Activated B cell treated with CpG ODN at 0.5 μM for 24 hours (primary cell): ENCODE measurements at regions of chr21 and their contacts with region 1.

Region 1: GRCh38 chr21:29002442-29003144 is 9.9 kb upstream of the LTN1 start:
- DNase-seq: peak; percentile 90
- ATAC-seq: peak; percentile 100
- H3K4me3 Mint-ChIP-seq: peak overlapping the region; percentile 90
- H3K27ac Mint-ChIP-seq: peak overlapping the region; percentile 95
- H3K4me1 Mint-ChIP-seq: peaks cover 12% of the 10 kb centered on the region
- H3K27me3 Mint-ChIP-seq: no peaks in the 10 kb centered on the region
- CTCF ChIP-seq: no peak

Region 2: GRCh38 chr21:28884976-28885852 is 117.4 kb before region 1 on chr21:
- CTCF ChIA-PET with region 1: no interaction called
- POLR2A ChIA-PET with region 1: interaction called, 5 read pairs
- intact Hi-C with region 1: loop called (anchors 1 kb)
- DNase-seq: peak; percentile 88
- ATAC-seq: peak; percentile 95
- H3K4me3 Mint-ChIP-seq: peak overlapping the region; percentile 88
- H3K27ac Mint-ChIP-seq: peak overlapping the region; percentile 93
- H3K4me1 Mint-ChIP-seq: peaks cover 20% of the 10 kb centered on the region
- H3K27me3 Mint-ChIP-seq: peaks cover 7% of the 10 kb centered on the region
- CTCF ChIP-seq: no peak

Region 3: DNA sequence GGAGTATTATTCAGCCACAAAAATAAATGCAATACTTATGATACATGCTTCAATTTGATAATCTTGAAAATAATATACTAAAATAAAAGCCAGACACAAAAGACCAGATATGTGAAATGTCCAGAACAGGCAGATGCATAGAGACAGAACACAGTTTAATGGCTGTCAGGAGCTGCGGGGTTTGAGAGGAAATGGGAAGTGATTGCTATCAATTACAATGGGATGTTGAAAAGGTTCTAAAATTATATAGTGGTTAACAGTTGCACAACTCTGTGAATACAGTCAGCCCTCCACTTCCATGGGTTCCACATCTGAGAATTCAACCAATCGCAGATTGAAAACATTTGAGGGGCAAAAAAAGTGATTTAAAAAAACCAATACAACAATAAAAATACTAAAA is 63.9 kb before region 1 on chr21:
- CTCF ChIA-PET with region 1: no interaction called
- POLR2A ChIA-PET with region 1: no interaction called
- intact Hi-C with region 1: no loop called
- DNase-seq: no peak
- ATAC-seq: no peak
- H3K4me3 Mint-ChIP-seq: no peak overlapping the region
- H3K27ac Mint-ChIP-seq: no peak overlapping the region
- H3K4me1 Mint-ChIP-seq: no peaks in the 10 kb centered on the region
- H3K27me3 Mint-ChIP-seq: no peaks in the 10 kb centered on the region
- CTCF ChIP-seq: no peak

Region 4: DNA sequence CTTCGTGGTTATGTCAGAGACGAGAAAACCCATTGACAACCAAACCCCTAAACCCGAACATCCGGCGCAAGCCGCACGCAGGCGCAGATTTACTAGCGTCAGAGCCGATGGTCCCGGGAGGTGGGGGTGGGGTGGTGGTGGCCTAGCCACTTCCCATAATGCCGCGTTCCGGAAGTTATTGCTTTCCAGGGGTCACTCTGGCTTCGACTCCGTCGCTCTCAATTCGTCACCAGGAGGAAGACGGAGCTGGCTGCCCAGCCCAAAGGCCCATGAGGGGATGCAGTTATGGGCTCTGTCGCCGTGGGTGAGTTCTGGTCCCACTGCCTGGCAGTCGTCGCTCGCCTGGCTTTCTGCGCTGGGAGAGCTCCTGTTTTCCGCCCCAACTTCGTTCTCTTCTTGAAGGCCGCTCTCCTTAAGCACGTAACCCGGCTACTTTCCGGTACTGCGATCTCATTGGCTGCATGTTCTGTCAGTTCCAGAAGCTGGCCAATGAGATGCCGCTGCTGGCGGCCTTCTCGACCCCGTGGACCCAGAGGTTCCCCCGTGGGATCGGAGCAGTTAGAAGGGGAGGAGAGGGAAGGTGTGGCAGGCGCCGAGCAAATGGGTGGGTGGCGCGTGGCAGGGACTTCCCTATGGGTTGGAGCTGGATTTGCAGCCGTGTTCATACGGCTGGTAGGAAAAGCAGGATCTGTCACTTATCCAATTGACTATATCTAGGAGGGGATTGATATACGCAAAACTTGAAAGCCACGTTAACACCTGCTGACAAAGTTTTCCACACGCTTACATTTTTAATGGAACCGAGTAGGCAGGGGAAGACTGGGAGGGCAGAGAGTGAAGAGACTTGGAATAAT is 22.1 kb after region 1 on chr21 and contains the start of gene USP16:
- CTCF ChIA-PET with region 1: interaction called, 8 read pairs
- POLR2A ChIA-PET with region 1: interaction called, 285 read pairs
- intact Hi-C with region 1: loop called (anchors 1 kb)
- DNase-seq: peak; percentile 94
- ATAC-seq: peak; percentile 93
- H3K4me3 Mint-ChIP-seq: peak within 1 kb of the TSS; percentile 98
- H3K27ac Mint-ChIP-seq: peak within 1 kb of the TSS; percentile 98
- H3K4me1 Mint-ChIP-seq: peaks cover 45% of the 10 kb centered on the region
- H3K27me3 Mint-ChIP-seq: no peaks in the 10 kb centered on the region
- CTCF ChIP-seq: no peak
- total RNA-seq, gene USP16: 53.2 and 54.6 TPM in 2 replicates